ENCODE measurements at regions of chr3 and their contacts with region 1.

Region 1: GRCh38 chr3:89851974-89852621 is 744.7 kb downstream of the EPHA3 start:
- DNase-seq: peak; percentile 92
- H3K4me3 ChIP-seq: no peak overlapping the region
- H3K27ac ChIP-seq: no peak overlapping the region
- H3K4me1 ChIP-seq: peaks cover 10% of the 10 kb centered on the region
- H3K27me3 ChIP-seq: no peaks in the 10 kb centered on the region
- CTCF ChIP-seq: peak; percentile 95

Region 2: DNA sequence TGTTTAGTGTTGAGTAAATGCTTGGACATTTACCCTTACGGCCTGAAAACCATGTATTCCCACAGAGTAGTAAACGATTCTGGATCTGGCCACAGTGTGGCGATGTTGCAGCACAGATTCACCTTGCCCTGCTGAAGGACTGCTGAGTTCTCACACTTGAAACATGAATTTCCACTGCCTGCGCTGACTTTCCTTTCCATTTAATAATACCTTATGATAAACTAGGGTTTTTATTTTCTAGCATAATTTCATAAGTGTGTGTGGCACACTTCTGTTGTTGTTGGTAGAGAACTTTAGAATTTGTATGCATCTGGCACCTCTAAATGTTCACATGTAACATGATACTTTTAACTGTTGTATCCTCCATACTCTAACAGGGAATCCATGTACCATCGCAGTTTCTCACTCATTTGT is 1648.4 kb before region 1 on chr3:
- CTCF ChIA-PET with region 1: no interaction called
- POLR2A ChIA-PET with region 1: no interaction called
- intact Hi-C with region 1: loop called (anchors 2 kb)
- DNase-seq: peak; percentile 87
- H3K4me3 ChIP-seq: no peak overlapping the region
- H3K27ac ChIP-seq: no peak overlapping the region
- H3K4me1 ChIP-seq: peaks cover 12% of the 10 kb centered on the region
- H3K27me3 ChIP-seq: no peaks in the 10 kb centered on the region
- CTCF ChIP-seq: peak; percentile 91

Region 3: GRCh38 chr3:89314454-89315098 is 537.5 kb before region 1 on chr3:
- CTCF ChIA-PET with region 1: no interaction called
- POLR2A ChIA-PET with region 1: no interaction called
- intact Hi-C with region 1: loop called (anchors 10 kb)
- DNase-seq: peak; percentile 87
- H3K4me3 ChIP-seq: no peak overlapping the region
- H3K27ac ChIP-seq: no peak overlapping the region
- H3K4me1 ChIP-seq: peaks cover 4% of the 10 kb centered on the region
- H3K27me3 ChIP-seq: no peaks in the 10 kb centered on the region
- CTCF ChIP-seq: peak; percentile 68

Region 4: GRCh38 chr3:89617706-89618105 is 234.4 kb before region 1 on chr3:
- CTCF ChIA-PET with region 1: no interaction called
- POLR2A ChIA-PET with region 1: no interaction called
- intact Hi-C with region 1: no loop called
- DNase-seq: peak; percentile 42
- H3K4me3 ChIP-seq: no peak overlapping the region
- H3K27ac ChIP-seq: no peak overlapping the region
- H3K4me1 ChIP-seq: peaks cover 7% of the 10 kb centered on the region
- H3K27me3 ChIP-seq: no peaks in the 10 kb centered on the region
- CTCF ChIP-seq: no peak

Region 5: DNA sequence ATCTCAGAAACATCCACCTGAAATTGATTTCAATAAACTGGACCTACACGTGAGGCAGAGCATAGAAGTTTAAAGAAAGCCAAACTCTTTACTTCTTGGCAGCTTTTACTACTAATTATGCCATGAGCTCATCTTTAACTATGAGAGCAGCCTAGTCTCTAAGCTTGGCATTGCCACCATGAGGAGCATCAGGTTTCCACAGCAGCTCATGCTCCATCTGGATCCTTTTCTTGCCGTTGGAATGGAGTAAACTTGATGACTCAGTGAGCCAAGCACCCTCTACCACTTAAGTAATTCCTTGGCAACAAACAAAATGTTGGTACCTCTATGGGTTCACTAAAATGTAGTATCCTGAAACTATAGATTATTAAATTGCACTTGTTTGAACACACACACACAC is 161.5 kb before region 1 on chr3:
- CTCF ChIA-PET with region 1: no interaction called
- POLR2A ChIA-PET with region 1: no interaction called
- intact Hi-C with region 1: loop called (anchors 10 kb)
- DNase-seq: peak; percentile 81
- H3K4me3 ChIP-seq: no peak overlapping the region
- H3K27ac ChIP-seq: no peak overlapping the region
- H3K4me1 ChIP-seq: peaks cover 19% of the 10 kb centered on the region
- H3K27me3 ChIP-seq: no peaks in the 10 kb centered on the region
- CTCF ChIP-seq: no peak; the same call in 1 of the 2 replicates

Region 6: DNA sequence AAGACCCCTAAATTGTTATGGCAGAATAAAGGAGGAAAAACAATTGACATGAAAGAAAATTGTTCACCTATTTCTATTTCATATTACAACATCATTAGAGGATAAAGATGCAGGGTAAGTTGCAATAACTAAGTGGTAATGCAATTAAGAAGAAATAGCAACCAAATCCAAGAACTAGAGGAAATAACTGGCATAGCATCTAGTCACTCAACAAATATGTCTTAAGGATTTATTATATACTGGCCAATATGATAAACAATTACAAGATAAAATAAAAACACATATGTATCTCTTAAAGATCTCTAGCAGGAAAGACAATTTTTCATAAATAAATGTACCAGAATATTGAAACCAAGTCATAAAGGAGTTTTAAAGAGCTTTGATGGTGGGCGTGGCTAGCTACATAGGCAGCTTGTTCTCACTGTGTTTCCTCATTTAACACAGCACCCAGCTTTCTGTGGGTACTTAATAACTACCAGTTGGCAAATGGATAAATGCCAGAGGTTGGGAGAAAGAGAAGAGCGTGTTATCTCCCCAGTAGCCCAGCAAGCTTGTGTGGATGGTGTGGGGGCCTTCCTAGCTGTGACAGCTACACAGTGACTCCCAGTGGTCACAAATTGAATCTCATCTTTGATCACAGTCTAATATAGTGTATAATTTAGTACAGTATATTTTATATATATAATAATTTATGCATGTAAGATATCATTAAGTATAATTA is 239.3 kb after region 1 on chr3:
- CTCF ChIA-PET with region 1: no interaction called
- POLR2A ChIA-PET with region 1: no interaction called
- intact Hi-C with region 1: loop called (anchors 2 kb)
- DNase-seq: peak; percentile 89
- H3K4me3 ChIP-seq: no peak overlapping the region
- H3K27ac ChIP-seq: no peak overlapping the region
- H3K4me1 ChIP-seq: peaks cover 21% of the 10 kb centered on the region
- H3K27me3 ChIP-seq: no peaks in the 10 kb centered on the region
- CTCF ChIP-seq: peak; percentile 71

Region 7: DNA sequence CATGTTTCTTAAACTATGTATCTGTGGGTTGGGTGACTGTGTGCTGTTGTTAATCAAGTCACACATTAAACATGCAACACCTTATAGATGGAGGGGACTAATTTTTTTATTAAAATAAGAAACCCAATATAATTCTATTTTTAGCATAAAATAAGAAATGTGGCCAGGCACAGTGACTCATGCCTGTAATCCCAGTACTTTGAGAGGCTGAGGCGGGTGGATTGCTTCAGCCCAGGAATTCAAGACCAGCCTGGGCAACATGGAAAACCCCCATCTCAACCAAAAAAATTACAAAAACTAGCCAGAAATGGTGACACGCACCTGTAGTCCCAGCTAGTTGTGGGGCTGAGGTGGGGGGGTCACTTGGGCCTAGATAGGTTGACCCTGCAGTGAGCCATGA is 276.3 kb after region 1 on chr3:
- CTCF ChIA-PET with region 1: no interaction called
- POLR2A ChIA-PET with region 1: no interaction called
- intact Hi-C with region 1: no loop called
- DNase-seq: no peak
- H3K4me3 ChIP-seq: no peak overlapping the region
- H3K27ac ChIP-seq: no peak overlapping the region
- H3K4me1 ChIP-seq: no peaks in the 10 kb centered on the region
- H3K27me3 ChIP-seq: no peaks in the 10 kb centered on the region
- CTCF ChIP-seq: no peak

Measured in A673 (cell line).